ENCODE measurements at regions of chr3 and their contacts with region 1.

Region 1: GRCh38 chr3:28139967-28140634 is 101.3 kb upstream of the CMC1 start:
- DNase-seq: no peak
- ATAC-seq: peak; percentile 6
- H3K4me3 ChIP-seq: no peak overlapping the region
- H3K27ac ChIP-seq: no peak overlapping the region
- H3K4me1 ChIP-seq: no peaks in the 10 kb centered on the region
- H3K27me3 ChIP-seq: no peaks in the 10 kb centered on the region
- CTCF ChIP-seq: no peak
- EP300 ChIP-seq: no peak
- POLR2A ChIP-seq: no peak
- RAD21 ChIP-seq: no peak

Region 2: GRCh38 chr3:28022916-28023315 is 117.2 kb before region 1 on chr3:
- CTCF ChIA-PET with region 1: interaction called, 3 read pairs
- POLR2A ChIA-PET with region 1: interaction called, 3 read pairs
- RAD21 ChIA-PET with region 1: interaction called, 248 read pairs
- SMC1A ChIA-PET with region 1: interaction called, 6 read pairs
- in situ Hi-C with region 1: no loop called
- intact Hi-C with region 1: no loop called
- DNase-seq: no peak
- ATAC-seq: 0 out of 3 replicates have a peak, but pooled peaks have one; percentile 8
- H3K4me3 ChIP-seq: no peak overlapping the region
- H3K27ac ChIP-seq: no peak overlapping the region
- H3K4me1 ChIP-seq: no peaks in the 10 kb centered on the region; the same call in 1 of the 2 replicates
- H3K27me3 ChIP-seq: no peaks in the 10 kb centered on the region
- CTCF ChIP-seq: no peak
- EP300 ChIP-seq: no peak
- POLR2A ChIP-seq: no peak
- RAD21 ChIP-seq: no peak

Region 3: DNA sequence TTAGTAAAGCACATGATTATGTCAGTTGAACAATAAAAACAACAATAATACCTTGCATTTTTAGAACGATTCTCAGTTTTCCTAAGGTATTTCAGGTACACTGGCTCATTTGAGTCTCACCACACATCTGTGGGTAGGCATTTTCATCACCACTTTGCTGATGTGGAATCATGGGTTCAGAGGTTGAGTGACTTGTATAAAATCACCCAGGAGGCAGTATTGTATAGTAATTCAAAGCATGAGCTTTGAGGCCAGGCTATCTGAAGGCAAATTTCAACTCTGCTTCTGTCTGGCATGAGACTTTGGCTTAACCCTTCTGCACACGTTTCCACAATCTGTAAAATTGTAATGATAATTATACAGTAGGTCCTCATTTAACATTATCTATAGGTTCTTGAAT is 82.6 kb before region 1 on chr3:
- CTCF ChIA-PET with region 1: interaction called, 3 read pairs
- POLR2A ChIA-PET with region 1: no interaction called
- RAD21 ChIA-PET with region 1: interaction called, 5 read pairs
- SMC1A ChIA-PET with region 1: interaction called, 16 read pairs
- in situ Hi-C with region 1: no loop called
- intact Hi-C with region 1: no loop called
- DNase-seq: no peak
- ATAC-seq: peak; percentile 41; the same call in 2 of the 3 replicates
- H3K4me3 ChIP-seq: no peak overlapping the region
- H3K27ac ChIP-seq: no peak overlapping the region
- H3K4me1 ChIP-seq: no peaks in the 10 kb centered on the region
- H3K27me3 ChIP-seq: no peaks in the 10 kb centered on the region
- CTCF ChIP-seq: no peak
- EP300 ChIP-seq: no peak
- POLR2A ChIP-seq: no peak
- RAD21 ChIP-seq: 0 out of 2 replicates have a peak, but pooled peaks have one; percentile 13

Region 4: DNA sequence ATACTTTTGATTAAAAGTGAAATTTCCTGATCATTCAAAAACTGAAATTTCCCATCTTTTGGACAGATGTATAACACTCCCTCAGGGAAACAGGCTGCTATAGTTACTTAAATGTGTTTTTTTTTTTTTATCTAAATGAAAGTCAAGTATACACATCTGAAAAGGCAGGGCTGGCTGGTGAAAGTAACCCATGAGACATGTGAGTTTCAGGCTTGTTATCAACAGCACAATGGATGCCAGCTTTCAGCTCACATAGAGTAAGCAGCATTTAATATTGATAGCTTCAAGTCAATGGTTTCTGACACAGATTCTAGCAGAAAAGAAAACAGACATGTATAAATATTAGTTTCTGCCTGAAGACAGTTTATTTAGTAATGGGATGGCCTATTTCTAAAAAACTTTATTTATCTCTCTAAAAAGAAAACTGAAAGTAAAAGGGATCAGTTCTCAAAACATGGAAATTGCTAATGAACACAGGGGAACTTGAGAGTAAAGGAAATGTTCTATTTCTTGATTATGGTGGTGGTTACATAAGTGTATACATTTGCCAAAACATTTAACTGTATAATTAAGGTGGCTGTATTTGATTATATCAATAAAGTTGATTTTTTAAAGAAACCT is 11.6 kb after region 1 on chr3:
- CTCF ChIA-PET with region 1: interaction called, 3 read pairs
- POLR2A ChIA-PET with region 1: interaction called, 8 read pairs
- RAD21 ChIA-PET with region 1: interaction called, 26 read pairs
- SMC1A ChIA-PET with region 1: interaction called, 602 read pairs
- in situ Hi-C with region 1: no loop called
- intact Hi-C with region 1: no loop called
- DNase-seq: peak; percentile 33
- ATAC-seq: peak; percentile 95
- H3K4me3 ChIP-seq: no peak overlapping the region
- H3K27ac ChIP-seq: no peak overlapping the region
- H3K4me1 ChIP-seq: no peaks in the 10 kb centered on the region
- H3K27me3 ChIP-seq: no peaks in the 10 kb centered on the region
- CTCF ChIP-seq: no peak
- EP300 ChIP-seq: no peak
- POLR2A ChIP-seq: no peak
- RAD21 ChIP-seq: no peak

Region 5: GRCh38 chr3:28252001-28252431 is 111.9 kb after region 1 on chr3:
- CTCF ChIA-PET with region 1: interaction called, 3 read pairs
- POLR2A ChIA-PET with region 1: interaction called, 5 read pairs
- RAD21 ChIA-PET with region 1: interaction called, 11 read pairs
- SMC1A ChIA-PET with region 1: interaction called, 16 read pairs
- in situ Hi-C with region 1: no loop called
- intact Hi-C with region 1: no loop called
- DNase-seq: no peak
- ATAC-seq: peak; percentile 86
- H3K4me3 ChIP-seq: no peak overlapping the region
- H3K27ac ChIP-seq: no peak overlapping the region
- H3K4me1 ChIP-seq: no peaks in the 10 kb centered on the region; the same call in 1 of the 2 replicates
- H3K27me3 ChIP-seq: no peaks in the 10 kb centered on the region
- CTCF ChIP-seq: no peak
- EP300 ChIP-seq: peak in 1 of 2 experiments; percentile 46; a peak in 2 of 4 replicates
- POLR2A ChIP-seq: no peak
- RAD21 ChIP-seq: no peak

Region 6: GRCh38 chr3:29731050-29731449 is 1590.9 kb after region 1 on chr3:
- CTCF ChIA-PET with region 1: no interaction called
- POLR2A ChIA-PET with region 1: no interaction called
- RAD21 ChIA-PET with region 1: no interaction called
- SMC1A ChIA-PET with region 1: no interaction called
- in situ Hi-C with region 1: no loop called
- intact Hi-C with region 1: no loop called
- DNase-seq: no peak
- ATAC-seq: no peak
- H3K4me3 ChIP-seq: no peak overlapping the region
- H3K27ac ChIP-seq: no peak overlapping the region
- H3K4me1 ChIP-seq: no peaks in the 10 kb centered on the region
- H3K27me3 ChIP-seq: no peaks in the 10 kb centered on the region
- CTCF ChIP-seq: no peak
- EP300 ChIP-seq: no peak
- POLR2A ChIP-seq: no peak
- RAD21 ChIP-seq: no peak